ENCODE measurements at regions of chr2 and their contacts with region 1.

Region 1: DNA sequence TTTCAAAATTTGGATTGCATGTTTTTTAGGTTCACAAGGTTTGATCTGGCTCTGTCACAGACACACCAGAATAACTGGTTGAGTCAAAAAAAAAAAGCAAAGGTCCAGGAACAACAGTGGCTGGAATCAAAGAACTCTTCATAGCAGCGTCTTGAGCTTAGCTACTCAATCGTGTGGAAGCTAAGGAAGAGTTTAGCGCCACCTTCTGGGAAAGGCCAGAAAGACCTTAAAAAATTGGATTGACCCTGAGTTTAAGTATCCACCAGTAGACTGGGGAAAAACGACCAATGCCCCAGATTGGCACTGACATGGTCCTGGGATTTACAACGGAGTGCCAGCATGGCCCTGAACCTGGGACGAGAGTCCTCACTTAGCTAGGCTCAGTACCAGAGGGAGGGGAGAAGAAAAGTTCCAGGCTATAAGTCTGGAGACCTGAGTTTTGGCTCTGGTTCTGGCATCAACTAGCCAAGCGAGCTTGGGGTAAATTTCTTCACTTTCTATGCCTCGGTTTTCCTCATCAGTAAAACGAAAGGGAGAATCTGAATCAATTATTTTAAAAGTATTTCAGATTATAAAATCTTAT is 71.1 kb upstream of the TFCP2L1 start:
- DNase-seq: peak; percentile 91
- ATAC-seq: peak; percentile 39
- H3K4me3 ChIP-seq: no peak overlapping the region
- H3K27ac ChIP-seq: peak overlapping the region; percentile 45
- H3K4me1 ChIP-seq: peaks cover 49% of the 10 kb centered on the region
- H3K27me3 ChIP-seq: no peaks in the 10 kb centered on the region
- CTCF ChIP-seq: peak; percentile 86

Region 2: GRCh38 chr2:121084130-121084680 is 271.9 kb before region 1 on chr2:
- CTCF ChIA-PET with region 1: interaction called, 11 read pairs
- POLR2A ChIA-PET with region 1: no interaction called
- intact Hi-C with region 1: no loop called
- DNase-seq: no peak
- ATAC-seq: no peak
- H3K4me3 ChIP-seq: no peak overlapping the region
- H3K27ac ChIP-seq: no peak overlapping the region
- H3K4me1 ChIP-seq: peaks cover 9% of the 10 kb centered on the region; the same call in 1 of the 2 replicates
- H3K27me3 ChIP-seq: no peaks in the 10 kb centered on the region
- CTCF ChIP-seq: no peak

Region 3: DNA sequence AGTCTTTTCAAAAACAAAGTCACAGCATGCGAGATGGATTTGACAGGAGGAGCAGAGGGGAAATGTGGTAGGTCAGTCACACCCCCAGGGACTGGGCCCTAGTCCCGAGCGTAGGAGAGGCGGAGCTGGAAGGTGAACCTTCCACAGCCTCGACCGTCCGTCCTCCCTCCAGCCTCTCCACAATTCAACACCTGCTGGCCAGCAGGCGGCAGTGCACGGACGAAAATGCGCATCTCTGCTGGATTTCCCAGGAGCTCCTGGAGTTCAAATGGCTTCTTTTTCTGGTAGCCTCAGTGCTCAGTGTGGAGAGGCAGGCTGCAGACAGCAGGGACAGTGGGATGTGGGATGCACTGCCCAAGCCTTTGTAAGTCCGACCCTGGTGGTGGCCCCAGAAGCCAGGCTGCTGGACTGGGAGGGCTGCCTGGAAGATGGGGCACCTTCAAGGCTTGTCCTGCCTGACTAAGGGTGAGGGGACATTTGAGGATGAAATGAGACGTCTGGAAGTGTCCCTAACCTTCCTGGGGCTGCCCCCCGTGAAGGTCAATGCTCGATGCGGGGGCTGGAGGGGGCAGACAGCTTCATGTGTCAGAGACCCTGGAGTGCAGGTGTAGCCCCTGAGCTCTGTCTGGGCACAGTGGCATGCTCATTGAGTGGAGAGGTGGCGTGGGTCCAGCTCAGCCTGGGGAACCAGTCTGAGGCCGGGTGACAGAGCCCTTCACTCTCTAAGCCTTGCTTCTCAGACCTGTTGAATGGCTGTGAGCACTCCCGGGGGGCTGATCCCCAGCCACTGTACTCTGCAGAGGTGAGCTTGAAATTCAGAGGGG is 260.7 kb before region 1 on chr2:
- CTCF ChIA-PET with region 1: interaction called, 29 read pairs
- POLR2A ChIA-PET with region 1: interaction called, 7 read pairs
- intact Hi-C with region 1: loop called (anchors 1 kb)
- DNase-seq: peak; percentile 85
- ATAC-seq: peak; percentile 84
- H3K4me3 ChIP-seq: no peak overlapping the region
- H3K27ac ChIP-seq: no peak overlapping the region
- H3K4me1 ChIP-seq: peaks cover 6% of the 10 kb centered on the region; the same call in 1 of the 2 replicates
- H3K27me3 ChIP-seq: peaks cover 2% of the 10 kb centered on the region; the same call in 1 of the 2 replicates
- CTCF ChIP-seq: peak; percentile 89

Region 4: GRCh38 chr2:121128754-121129659 is 227.1 kb before region 1 on chr2:
- CTCF ChIA-PET with region 1: interaction called, 14 read pairs
- POLR2A ChIA-PET with region 1: no interaction called
- intact Hi-C with region 1: loop called (anchors 5 kb)
- DNase-seq: peak; percentile 80
- ATAC-seq: peak; percentile 73
- H3K4me3 ChIP-seq: no peak overlapping the region
- H3K27ac ChIP-seq: no peak overlapping the region
- H3K4me1 ChIP-seq: no peaks in the 10 kb centered on the region
- H3K27me3 ChIP-seq: 0 out of 2 replicates have a peak, but pooled peaks cover 9% of the 10 kb centered on the region
- CTCF ChIP-seq: peak; percentile 92

Measured in PC-3 (cell line).